Posterior cingulate gyrus (tissue), 11 donors: ENCODE measurements at regions of chr17 and their contacts with region 1.

Region 1: DNA sequence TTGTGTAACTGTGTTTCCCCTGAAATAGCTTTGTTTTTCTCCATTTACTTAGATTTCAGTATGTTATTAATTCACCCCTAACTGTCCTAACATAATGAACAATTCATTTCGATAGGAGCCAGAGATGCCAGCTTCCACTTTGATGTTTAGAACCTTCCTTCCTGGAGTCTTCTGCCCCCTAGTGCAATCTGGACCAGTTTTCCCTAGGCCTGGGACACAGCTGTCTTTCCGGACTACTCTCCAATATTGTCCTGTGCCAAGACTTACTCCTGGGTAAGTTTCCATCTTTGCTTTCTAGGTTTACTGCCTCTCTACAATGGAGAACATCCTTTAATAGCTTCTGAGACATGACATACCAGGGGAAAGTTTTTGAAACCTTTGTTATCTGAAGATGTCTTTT is 12.8 kb downstream of the RECQL5 start:
- DNase-seq: peak in 3 of 10 donors; percentile 15 to 66 (median 50)

Region 2: GRCh38 chr17:75632863-75633485 is 21.2 kb before region 1 on chr17 and contains the start of gene SMIM5:
- intact Hi-C with region 1: loop called (anchors 1 kb)
- DNase-seq: peak; percentile 90 to 99 (median 95)

Region 3: DNA sequence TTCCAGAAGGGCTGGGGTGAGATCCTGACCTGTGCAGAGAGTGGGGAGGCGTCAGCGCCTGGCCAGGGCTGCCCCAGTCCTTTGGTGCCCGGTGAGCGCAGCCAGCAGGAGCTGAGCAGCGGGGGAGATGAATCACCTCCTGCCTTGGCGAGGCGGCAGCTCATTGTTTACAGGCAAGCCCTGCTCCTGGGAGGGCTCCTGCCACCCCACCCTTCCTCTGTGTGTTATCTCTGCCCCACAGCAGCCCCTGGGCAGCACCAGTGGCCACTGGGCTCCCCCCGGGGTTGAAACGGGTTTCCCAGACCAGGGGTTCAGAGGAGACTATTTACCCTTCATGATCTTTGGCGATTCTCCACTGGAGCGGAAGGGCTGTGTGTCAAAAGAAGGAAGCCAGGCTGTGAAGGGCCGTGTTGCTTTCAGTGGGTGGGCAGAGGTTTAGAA is 53.0 kb after region 1 on chr17:
- intact Hi-C with region 1: no loop called
- DNase-seq: peak in 1 of 10 donors; percentile 77